HEK293 (cell line): ENCODE measurements at regions of chr14 and their contacts with region 1.

Region 1: GRCh38 chr14:34098045-34098984 is 147.4 kb upstream of the EGLN3 start:
- H3K4me3 ChIP-seq: no peak overlapping the region
- H3K27ac ChIP-seq: no peak overlapping the region
- H3K4me1 ChIP-seq: no peaks in the 10 kb centered on the region
- CTCF ChIP-seq: 0 out of 2 replicates have a peak, but pooled peaks have one; percentile 20

Region 2: DNA sequence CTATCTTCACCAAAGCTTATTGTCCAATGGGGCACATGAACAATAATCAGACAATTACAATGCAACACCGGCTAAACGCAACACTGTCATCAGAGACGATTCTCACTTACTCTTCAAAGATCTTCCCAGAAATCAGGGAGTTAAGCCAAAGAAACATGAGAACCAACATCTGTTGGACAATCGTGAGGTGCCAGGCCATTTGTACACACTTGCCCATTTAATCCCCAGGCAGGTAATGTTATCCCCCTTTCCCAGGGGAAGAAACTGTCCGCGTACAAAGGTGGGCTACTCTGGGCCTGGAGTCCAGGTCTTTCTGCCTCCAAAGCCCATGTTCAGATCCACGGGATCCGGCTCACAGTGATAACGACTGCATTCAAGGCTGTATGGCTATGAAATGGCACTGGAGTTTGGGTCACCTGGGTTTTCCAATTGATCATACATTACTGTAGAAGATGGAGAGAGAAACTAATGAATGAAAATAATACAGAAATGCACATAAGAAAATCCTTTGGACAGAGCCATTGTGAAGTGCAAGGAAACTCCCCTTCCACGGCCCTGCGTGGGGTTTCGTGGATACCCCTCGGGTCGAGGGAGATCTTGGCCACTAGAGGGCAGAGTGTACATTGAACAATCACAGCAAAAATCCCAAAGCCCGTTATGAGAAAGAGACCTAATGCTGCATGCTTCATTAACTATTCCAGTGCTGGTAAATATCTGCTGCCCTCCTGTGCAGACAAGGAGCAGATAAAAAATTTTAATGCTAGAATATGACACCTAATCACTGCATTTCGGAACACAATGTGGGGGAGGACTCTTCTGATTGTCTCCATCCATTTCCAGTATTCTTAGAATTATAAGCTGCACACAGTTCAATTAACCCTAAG is 258.9 kb before region 1 on chr14:
- CTCF ChIA-PET with region 1: interaction called, 86 read pairs
- POLR2A ChIA-PET with region 1: no interaction called
- H3K4me3 ChIP-seq: no peak overlapping the region
- H3K27ac ChIP-seq: no peak overlapping the region
- H3K4me1 ChIP-seq: no peaks in the 10 kb centered on the region
- CTCF ChIP-seq: peak; percentile 19; the same call in 1 of the 2 replicates

Region 3: GRCh38 chr14:33848706-33849454 is 249.4 kb before region 1 on chr14:
- CTCF ChIA-PET with region 1: interaction called, 86 read pairs
- POLR2A ChIA-PET with region 1: no interaction called
- H3K4me3 ChIP-seq: no peak overlapping the region
- H3K27ac ChIP-seq: no peak overlapping the region
- H3K4me1 ChIP-seq: no peaks in the 10 kb centered on the region
- CTCF ChIP-seq: 0 out of 2 replicates have a peak, but pooled peaks have one; percentile 17

Region 4: DNA sequence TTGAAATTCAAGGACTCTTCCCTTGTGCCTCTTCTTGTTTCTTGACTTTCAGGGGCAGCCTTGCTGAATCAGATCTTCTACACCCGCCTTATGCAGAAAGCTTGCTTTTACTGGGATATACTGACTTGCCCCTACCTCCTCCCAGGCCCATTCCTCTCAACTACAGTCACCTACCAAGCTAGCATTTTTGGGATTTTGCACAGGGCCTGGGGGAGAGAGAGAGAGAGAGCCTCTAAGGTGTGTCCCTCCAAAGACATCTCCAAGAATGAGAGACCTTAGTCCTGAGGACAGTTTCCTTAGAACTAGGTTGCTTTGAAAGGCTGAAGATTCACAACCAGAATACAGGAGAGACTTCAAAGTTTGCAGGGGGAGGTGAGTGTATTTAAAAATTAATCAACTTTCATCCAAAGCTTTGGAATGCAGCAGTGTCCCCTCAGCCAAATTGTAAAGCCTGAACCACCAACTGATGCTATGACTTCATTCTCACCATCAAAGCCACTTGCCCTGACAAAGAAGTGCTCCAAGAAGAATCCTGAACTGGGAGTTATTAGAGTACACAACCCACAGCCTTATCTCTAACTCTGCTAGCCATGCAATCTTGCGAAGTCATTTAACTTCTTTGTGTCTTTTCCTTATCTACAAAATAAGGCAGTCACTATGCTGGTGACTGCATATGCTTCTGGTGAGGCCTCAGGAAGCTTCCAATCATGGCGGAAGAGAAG is 51.4 kb before region 1 on chr14:
- CTCF ChIA-PET with region 1: interaction called, 12 read pairs
- POLR2A ChIA-PET with region 1: no interaction called
- H3K4me3 ChIP-seq: no peak overlapping the region
- H3K27ac ChIP-seq: no peak overlapping the region
- H3K4me1 ChIP-seq: no peaks in the 10 kb centered on the region
- CTCF ChIP-seq: no peak

Region 5: GRCh38 chr14:34224221-34224620 is 125.9 kb after region 1 on chr14:
- CTCF ChIA-PET with region 1: interaction called, 16 read pairs
- POLR2A ChIA-PET with region 1: interaction called, 4 read pairs
- H3K4me3 ChIP-seq: no peak overlapping the region
- H3K27ac ChIP-seq: no peak overlapping the region
- H3K4me1 ChIP-seq: no peaks in the 10 kb centered on the region
- CTCF ChIP-seq: no peak

Region 6: DNA sequence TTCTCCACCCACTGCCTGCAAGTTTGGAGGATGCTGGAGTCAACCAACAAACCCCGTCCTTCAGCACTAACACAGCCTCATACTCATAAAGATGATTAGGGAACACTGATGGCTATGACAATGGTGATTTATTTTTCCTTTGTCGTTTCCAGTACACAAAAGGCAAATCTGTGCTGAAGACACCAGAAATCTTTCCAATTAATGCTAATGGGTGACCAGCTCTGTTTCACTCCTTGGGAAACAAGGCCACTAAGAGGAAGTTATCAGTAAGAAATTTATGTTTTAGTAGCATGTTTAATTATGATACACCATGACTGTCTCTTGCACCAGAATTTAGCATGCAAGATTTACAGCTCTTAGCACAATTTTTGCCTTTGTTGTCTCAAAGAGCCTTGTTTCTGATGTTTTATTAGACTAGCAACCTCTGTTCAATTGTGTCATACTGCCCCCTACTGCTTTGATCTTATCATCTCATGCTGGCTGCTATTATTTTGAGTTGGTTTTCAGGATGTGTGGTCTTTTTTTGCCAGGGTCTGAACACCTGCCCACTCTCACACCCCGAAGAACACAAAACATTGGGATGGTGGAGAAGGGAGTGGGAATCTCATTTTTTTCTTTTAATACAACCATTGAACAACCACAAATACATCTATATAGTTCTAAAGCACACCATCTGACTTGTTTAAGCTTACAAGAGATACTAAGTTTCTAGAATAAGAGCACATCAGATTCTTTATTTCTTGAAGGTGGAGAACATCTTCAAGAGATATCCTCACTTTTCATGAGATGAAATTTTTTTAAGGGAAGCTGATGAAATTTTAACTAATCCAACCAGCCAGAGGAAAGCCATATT is 202.8 kb after region 1 on chr14:
- CTCF ChIA-PET with region 1: interaction called, 10 read pairs
- POLR2A ChIA-PET with region 1: no interaction called
- H3K4me3 ChIP-seq: no peak overlapping the region
- H3K27ac ChIP-seq: no peak overlapping the region
- H3K4me1 ChIP-seq: no peaks in the 10 kb centered on the region
- CTCF ChIP-seq: peak; percentile 46; the same call in 1 of the 2 replicates